Prostate gland (tissue), 2 donors: ENCODE measurements at regions of chr3 and their contacts with region 1.

Region 1: GRCh38 chr3:43769471-43770425 is 79.0 kb downstream of the ABHD5 start:
- DNase-seq: peak; percentile 86
- H3K4me3 ChIP-seq: peak overlapping the region in 1 of 2 donors; percentile 8
- H3K27ac ChIP-seq: peak overlapping the region; percentile 23 to 47
- H3K4me1 ChIP-seq: no peaks in the 10 kb centered on the region
- H3K27me3 ChIP-seq: no peaks in the 10 kb centered on the region
- CTCF ChIP-seq: peak; percentile 78 to 90 (median 86)
- POLR2A ChIP-seq: no peak

Region 2: DNA sequence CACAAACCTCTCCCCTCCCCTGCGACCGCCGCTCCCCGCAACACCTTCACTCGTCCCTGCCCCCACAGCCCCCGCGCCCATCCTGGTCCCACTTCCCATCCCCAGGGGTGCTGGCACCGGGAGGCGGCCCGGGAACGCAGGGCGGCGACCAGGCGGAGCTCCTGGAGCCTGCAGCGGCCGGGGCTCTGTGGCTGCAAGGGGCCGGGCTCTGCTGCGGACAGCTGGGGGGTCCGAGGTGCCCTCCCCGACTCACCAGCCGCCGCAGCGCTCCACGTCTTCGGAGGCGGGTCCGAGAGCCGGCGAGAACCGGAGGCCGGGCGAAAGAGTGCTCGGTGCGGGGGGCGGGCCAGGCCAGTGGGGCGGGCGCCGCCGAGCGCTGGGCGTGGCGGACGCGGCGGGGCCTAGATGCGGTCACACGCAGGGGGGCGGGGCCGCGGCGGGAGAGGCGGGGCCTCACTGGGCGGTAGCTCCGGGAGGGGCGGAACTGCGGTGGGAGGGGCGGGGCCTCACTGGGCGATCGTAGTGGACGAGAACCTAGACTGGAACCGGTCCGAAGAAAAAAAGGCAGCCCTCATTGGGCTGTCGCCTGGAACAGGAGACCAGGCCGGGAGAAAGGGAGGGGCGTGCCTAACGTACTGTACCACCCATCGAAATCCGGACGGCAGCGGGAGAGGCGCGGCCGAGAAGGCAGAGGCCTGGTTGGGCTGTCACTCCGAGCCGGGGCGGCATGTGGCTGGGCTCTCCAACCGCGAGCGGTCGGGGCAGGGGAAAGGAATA is 147.9 kb before region 1 on chr3 and contains the start of gene ANO10:
- intact Hi-C with region 1: loop called (anchors 5 kb)
- DNase-seq: peak; percentile 99
- H3K4me3 ChIP-seq: peak within 1 kb of the TSS; percentile 86 to 96
- H3K27ac ChIP-seq: peak within 1 kb of the TSS; percentile 85 to 90
- H3K4me1 ChIP-seq: no peaks in the 10 kb centered on the region
- H3K27me3 ChIP-seq: no peaks in the 10 kb centered on the region
- CTCF ChIP-seq: no peak
- POLR2A ChIP-seq: peak; percentile 93
- total RNA-seq, gene ANO10: 12.4 to 17.7 TPM

Region 3: GRCh38 chr3:43690400-43691119 is 79.2 kb before region 1 on chr3 and contains the start of gene ABHD5:
- intact Hi-C with region 1: loop called (anchors 5 kb)
- DNase-seq: peak; percentile 85
- H3K4me3 ChIP-seq: peak within 1 kb of the TSS; percentile 91 to 96
- H3K27ac ChIP-seq: peak within 1 kb of the TSS; percentile 92 to 94
- H3K4me1 ChIP-seq: no peaks in the 10 kb centered on the region
- H3K27me3 ChIP-seq: no peaks in the 10 kb centered on the region
- CTCF ChIP-seq: peak in 3 of 4 experiments; percentile 24 to 27 (median 26)
- POLR2A ChIP-seq: peak; percentile 99
- total RNA-seq, gene ABHD5: 10.7 to 20.6 TPM

Region 4: GRCh38 chr3:44198284-44199269 is 428.8 kb after region 1 on chr3:
- intact Hi-C with region 1: loop called (anchors 10 kb)
- DNase-seq: peak; percentile 68
- H3K4me3 ChIP-seq: no peak overlapping the region
- H3K27ac ChIP-seq: no peak overlapping the region
- H3K4me1 ChIP-seq: no peaks in the 10 kb centered on the region
- H3K27me3 ChIP-seq: no peaks in the 10 kb centered on the region
- CTCF ChIP-seq: peak; percentile 32 to 80 (median 71)
- POLR2A ChIP-seq: no peak